ENCODE measurements at regions of chr4 and their contacts with region 1.

Region 1: GRCh38 chr4:44927399-44928380 is 201.3 kb upstream of the GNPDA2 start:
- DNase-seq: no peak
- ATAC-seq: no peak
- H3K4me3 ChIP-seq: no peak overlapping the region
- H3K27ac ChIP-seq: no peak overlapping the region
- H3K4me1 ChIP-seq: no peaks in the 10 kb centered on the region
- H3K27me3 ChIP-seq: no peaks in the 10 kb centered on the region

Region 2: GRCh38 chr4:45442466-45442865 is 514.8 kb after region 1 on chr4:
- intact Hi-C with region 1: loop called in 1 of 4 experiments (anchors 5 kb)
- DNase-seq: no peak
- ATAC-seq: peak; percentile 26 to 46
- H3K4me3 ChIP-seq: no peak overlapping the region
- H3K27ac ChIP-seq: no peak overlapping the region
- H3K4me1 ChIP-seq: no peaks in the 10 kb centered on the region
- H3K27me3 ChIP-seq: no peaks in the 10 kb centered on the region

Measured in right cardiac atrium (tissue), 5 donors.